Testis (tissue), 5 donors: ENCODE measurements at regions of chr9 and their contacts with region 1.

Region 1: DNA sequence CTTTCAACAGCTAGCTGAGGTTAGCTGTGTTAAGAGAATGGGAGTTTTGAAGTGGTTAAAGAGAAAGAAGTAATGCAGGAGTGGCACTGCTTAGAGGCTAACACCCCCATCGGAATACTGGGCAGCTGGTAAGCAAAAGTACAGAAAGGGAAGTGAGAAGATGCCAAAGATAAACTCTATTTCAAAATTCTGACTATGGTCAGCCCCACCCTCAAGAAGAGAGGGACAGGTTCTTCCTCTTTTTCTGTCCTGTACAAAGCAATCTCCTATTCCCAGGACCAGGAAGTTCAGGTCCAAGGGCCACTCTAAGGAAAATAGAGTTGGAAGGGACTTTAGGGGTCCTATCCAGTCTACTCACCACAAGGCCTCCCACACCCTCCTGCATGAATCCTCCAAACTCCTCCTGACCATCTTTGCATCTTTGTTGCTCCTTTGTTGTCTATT is 45.9 kb upstream of the JAK2 start:
- DNase-seq: no peak
- H3K4me3 ChIP-seq: no peak overlapping the region
- H3K27ac ChIP-seq: no peak overlapping the region
- H3K4me1 ChIP-seq: peaks cover 7% of the 10 kb centered on the region
- H3K27me3 ChIP-seq: no peaks in the 10 kb centered on the region
- CTCF ChIP-seq: no peak
- POLR2A ChIP-seq: no peak

Region 2: DNA sequence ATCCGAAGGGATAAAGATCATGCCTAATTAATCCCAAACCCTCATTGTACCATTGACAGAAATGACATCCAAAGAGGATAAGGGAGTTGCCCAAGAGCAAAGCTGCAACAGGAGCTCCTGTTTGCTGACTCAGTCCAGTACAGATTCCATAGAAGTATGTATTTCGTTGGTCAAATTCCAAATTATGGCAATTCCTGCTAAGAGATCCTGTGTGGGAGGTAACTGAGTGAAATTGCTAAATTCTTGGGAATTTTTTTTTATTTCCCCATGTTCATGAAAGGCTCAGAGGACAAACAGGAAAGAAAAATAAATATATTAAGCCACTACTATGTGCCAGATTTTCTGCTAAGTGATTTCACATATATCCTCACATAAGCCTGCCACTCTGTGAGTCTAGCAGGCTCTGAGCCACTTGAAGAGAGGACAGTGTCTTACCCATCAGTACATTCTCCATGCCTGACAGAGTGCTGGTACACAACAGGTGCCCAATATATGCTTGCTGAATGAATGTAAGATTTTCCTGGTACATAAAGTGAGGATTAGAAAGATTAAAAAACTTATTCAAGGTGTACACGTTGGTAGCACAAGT is 772.0 kb before region 1 on chr9:
- intact Hi-C with region 1: no loop called
- DNase-seq: no peak
- H3K4me3 ChIP-seq: no peak overlapping the region
- H3K27ac ChIP-seq: no peak overlapping the region
- H3K4me1 ChIP-seq: peaks cover 4% of the 10 kb centered on the region
- H3K27me3 ChIP-seq: no peaks in the 10 kb centered on the region
- CTCF ChIP-seq: no peak
- POLR2A ChIP-seq: no peak

Region 3: GRCh38 chr9:4984621-4985385 is 45.7 kb after region 1 on chr9 and contains the start of gene JAK2:
- intact Hi-C with region 1: loop called (anchors 10 kb)
- DNase-seq: peak; percentile 91
- H3K4me3 ChIP-seq: peak within 1 kb of the TSS; percentile 78 to 82
- H3K27ac ChIP-seq: peak within 1 kb of the TSS; percentile 94 to 97
- H3K4me1 ChIP-seq: peaks cover 18% of the 10 kb centered on the region
- H3K27me3 ChIP-seq: no peaks in the 10 kb centered on the region
- CTCF ChIP-seq: peak in 2 of 3 experiments; percentile 4 to 14
- POLR2A ChIP-seq: peak; percentile 13
- total RNA-seq, gene JAK2: 24.1 to 25.5 TPM